ENCODE measurements at regions of chr6 and their contacts with region 1.

Region 1: GRCh38 chr6:1247056-1247455 is 64.8 kb upstream of the FOXQ1 start:
- DNase-seq: no peak
- ATAC-seq: no peak
- H3K4me3 ChIP-seq: no peak overlapping the region
- H3K27ac ChIP-seq: no peak overlapping the region
- H3K4me1 ChIP-seq: peaks cover 0 to 6% (median 0%) of the 10 kb centered on the region in 9 donors
- H3K27me3 ChIP-seq: peaks cover 0 to 28% (median 13%) of the 10 kb centered on the region in 7 donors
- CTCF ChIP-seq: no peak

Region 2: DNA sequence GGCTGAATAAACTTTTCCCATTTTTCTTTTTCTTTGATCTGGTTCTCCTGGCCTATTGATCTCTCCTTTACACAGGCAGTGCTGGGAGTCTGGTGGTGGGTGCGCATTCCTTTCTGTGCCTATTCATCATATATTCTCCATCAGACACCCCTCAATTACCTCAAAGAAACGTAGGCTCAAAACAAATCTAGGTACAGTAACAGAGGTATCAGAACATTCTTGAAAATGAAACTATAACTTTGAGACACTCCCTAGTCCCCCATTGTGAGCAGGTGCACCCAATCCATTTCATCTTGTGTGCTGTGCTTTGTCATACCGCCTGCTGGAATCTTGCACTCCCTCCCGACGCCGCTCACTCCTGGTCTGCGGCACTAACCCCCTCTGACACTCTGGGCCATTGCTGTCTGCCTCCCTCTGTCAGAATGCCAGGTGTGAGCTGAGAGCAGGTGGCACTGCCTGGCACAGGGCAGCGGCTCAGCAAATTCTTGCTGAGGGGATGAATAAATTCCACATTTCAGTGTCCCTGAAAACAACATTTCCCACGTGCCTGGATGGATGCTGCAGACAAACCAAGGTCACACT is 250.7 kb before region 1 on chr6:
- intact Hi-C with region 1: no loop called
- DNase-seq: no peak
- ATAC-seq: no peak
- H3K4me3 ChIP-seq: no peak overlapping the region
- H3K27ac ChIP-seq: no peak overlapping the region
- H3K4me1 ChIP-seq: no peaks in the 10 kb centered on the region
- H3K27me3 ChIP-seq: peaks cover 0 to 27% (median 15%) of the 10 kb centered on the region in 7 donors
- CTCF ChIP-seq: no peak

Region 3: GRCh38 chr6:1267790-1268762 is 21.0 kb after region 1 on chr6:
- intact Hi-C with region 1: no loop called
- DNase-seq: no peak
- ATAC-seq: no peak
- H3K4me3 ChIP-seq: no peak overlapping the region
- H3K27ac ChIP-seq: no peak overlapping the region
- H3K4me1 ChIP-seq: no peaks in the 10 kb centered on the region
- H3K27me3 ChIP-seq: peaks cover 0 to 52% (median 41%) of the 10 kb centered on the region in 7 donors
- CTCF ChIP-seq: no peak

Region 4: GRCh38 chr6:1286972-1287610 is 40.0 kb after region 1 on chr6:
- intact Hi-C with region 1: loop called in 1 of 10 experiments (anchors 2 kb)
- DNase-seq: no peak
- ATAC-seq: peak in 1 of 8 donors; percentile 50
- H3K4me3 ChIP-seq: no peak overlapping the region
- H3K27ac ChIP-seq: peak overlapping the region in 1 of 10 donors; percentile 68
- H3K4me1 ChIP-seq: peaks cover 0 to 29% (median 0%) of the 10 kb centered on the region in 9 donors
- H3K27me3 ChIP-seq: peaks cover 0 to 33% (median 11%) of the 10 kb centered on the region in 7 donors
- CTCF ChIP-seq: no peak

Region 5: GRCh38 chr6:1436334-1437306 is 189.6 kb after region 1 on chr6:
- intact Hi-C with region 1: no loop called
- DNase-seq: peak in 1 of 2 donors; percentile 42
- ATAC-seq: peak in 7 of 8 donors; percentile 61 to 77 (median 69)
- H3K4me3 ChIP-seq: no peak overlapping the region
- H3K27ac ChIP-seq: no peak overlapping the region
- H3K4me1 ChIP-seq: no peaks in the 10 kb centered on the region
- H3K27me3 ChIP-seq: peaks cover 0 to 60% (median 49%) of the 10 kb centered on the region in 7 donors
- CTCF ChIP-seq: peak; percentile 43 to 82 (median 76)